Mucosa of descending colon (tissue), 3 donors: ENCODE measurements at regions of chr13 and their contacts with region 1.

Region 1: GRCh38 chr13:20035130-20035529 is 76.6 kb downstream of the ZMYM2 start:
- DNase-seq: no peak
- ATAC-seq: no peak
- H3K4me3 ChIP-seq: no peak overlapping the region
- H3K4me1 ChIP-seq: no peaks in the 10 kb centered on the region
- CTCF ChIP-seq: no peak

Region 2: DNA sequence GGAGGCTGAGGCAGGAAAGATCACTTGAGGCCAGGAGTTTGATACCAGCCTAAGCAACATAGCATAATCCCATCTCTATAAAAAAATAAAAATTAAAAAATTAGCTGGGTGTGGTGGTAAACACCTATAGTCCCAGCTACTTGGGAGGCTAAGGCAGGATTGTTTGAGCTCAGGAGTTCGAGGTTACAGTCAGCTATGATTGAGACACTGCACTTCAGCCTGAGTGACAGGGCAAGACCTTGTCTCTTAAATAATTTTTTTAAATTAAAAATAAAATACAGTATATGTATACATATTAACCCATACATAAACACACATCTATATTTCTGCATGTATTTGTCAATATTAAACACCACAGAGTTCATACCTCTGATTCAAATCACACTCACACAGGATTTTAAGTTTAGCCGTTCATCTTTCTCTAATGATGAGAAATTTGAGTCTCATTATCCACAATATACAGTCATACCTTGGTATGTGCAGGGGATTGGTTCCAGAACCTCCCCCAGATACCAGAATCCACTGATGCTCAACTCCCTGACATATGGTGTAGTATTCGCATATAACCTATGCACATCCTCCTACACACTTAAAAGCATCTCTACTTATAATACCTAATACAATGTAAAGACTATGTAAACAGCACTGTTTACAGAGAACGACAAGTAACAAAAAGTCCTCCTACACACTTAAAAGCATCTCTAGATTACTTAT is 297.1 kb before region 1 on chr13:
- intact Hi-C with region 1: loop called in 1 of 2 experiments (anchors 10 kb)
- DNase-seq: no peak
- ATAC-seq: no peak
- H3K4me3 ChIP-seq: no peak overlapping the region
- H3K4me1 ChIP-seq: no peaks in the 10 kb centered on the region
- CTCF ChIP-seq: no peak

Region 3: GRCh38 chr13:19845758-19846157 is 189.4 kb before region 1 on chr13:
- intact Hi-C with region 1: no loop called
- DNase-seq: peak in 1 of 3 donors; percentile 9
- ATAC-seq: peak; percentile 61
- H3K4me3 ChIP-seq: no peak overlapping the region
- H3K4me1 ChIP-seq: no peaks in the 10 kb centered on the region
- CTCF ChIP-seq: no peak

Region 4: GRCh38 chr13:20495082-20496023 is 460.2 kb after region 1 on chr13:
- intact Hi-C with region 1: no loop called
- DNase-seq: peak in 1 of 3 donors; percentile 86
- ATAC-seq: peak; percentile 93
- H3K4me3 ChIP-seq: no peak overlapping the region
- H3K4me1 ChIP-seq: no peaks in the 10 kb centered on the region
- CTCF ChIP-seq: peak; percentile 89